Right lobe of liver (tissue), 6 donors: ENCODE measurements at regions of chr11 and their contacts with region 1.

Region 1: DNA sequence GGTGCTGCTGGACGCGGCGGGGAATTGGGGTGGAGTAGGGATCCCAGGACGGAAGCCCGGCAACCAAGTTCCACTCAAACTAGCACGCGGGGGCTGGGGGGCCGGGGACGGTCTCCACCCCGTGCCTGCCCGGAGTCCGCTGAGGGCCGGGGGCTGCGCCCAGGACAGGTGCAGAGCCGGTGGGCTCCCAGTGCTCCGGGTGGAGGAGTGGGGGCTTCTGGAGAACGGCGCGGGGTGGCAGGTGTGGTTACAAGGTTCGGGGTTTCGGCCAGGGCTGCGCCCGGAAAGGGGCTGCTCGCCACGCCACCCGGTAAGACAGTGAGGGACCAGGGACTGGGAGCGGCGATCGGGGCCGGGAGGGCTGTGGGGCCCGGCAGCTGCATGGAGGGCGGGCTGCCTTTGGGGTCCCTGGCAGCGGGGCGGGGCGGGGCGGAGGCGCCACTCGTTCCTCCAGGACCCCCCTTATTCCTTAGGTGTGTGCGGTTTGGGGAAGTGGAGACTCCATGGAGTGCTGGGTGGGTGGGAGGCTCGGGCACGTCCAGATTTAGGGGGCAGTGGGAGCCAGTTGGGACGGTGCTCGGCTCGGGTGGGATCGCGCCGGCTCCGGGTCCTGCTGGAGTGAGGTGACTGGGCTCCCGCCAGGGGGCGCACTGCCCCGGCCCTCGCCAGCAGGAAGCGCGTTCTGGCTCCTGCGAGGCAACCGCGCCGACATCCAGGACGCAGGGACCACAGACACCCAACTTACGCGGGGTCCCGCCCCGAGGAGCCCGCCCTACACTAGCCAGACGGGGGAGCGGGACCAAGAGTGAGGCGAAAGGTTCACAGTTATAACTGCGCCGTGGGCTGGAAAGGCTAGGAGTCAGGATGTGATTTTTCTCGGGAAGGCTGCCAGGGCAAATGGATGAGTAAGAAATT is 868 bp downstream of the TSPAN18 start:
- DNase-seq: peak; percentile 78 to 86 (median 84)
- ATAC-seq: peak; percentile 88 to 93 (median 92)
- H3K4me3 ChIP-seq: peak overlapping the region; percentile 37 to 48 (median 48)
- H3K27ac ChIP-seq: peak overlapping the region in 1 of 3 donors; percentile 14
- H3K4me1 ChIP-seq: peaks cover 0 to 7% (median 0%) of the 10 kb centered on the region in 4 donors
- H3K27me3 ChIP-seq: no peaks in the 10 kb centered on the region
- CTCF ChIP-seq: peak; percentile 82 to 95 (median 94)
- POLR2A ChIP-seq: no peak

Region 2: GRCh38 chr11:44911029-44911814 is 183.6 kb after region 1 on chr11:
- intact Hi-C with region 1: loop called in 1 of 2 experiments (anchors 10 kb)
- DNase-seq: peak in 2 of 3 donors; percentile 72 to 85
- ATAC-seq: peak; percentile 73 to 81 (median 78)
- H3K4me3 ChIP-seq: peak overlapping the region in 1 of 3 donors; percentile 13
- H3K27ac ChIP-seq: no peak overlapping the region
- H3K4me1 ChIP-seq: peaks cover 0 to 22% (median 0%) of the 10 kb centered on the region in 4 donors
- H3K27me3 ChIP-seq: no peaks in the 10 kb centered on the region
- CTCF ChIP-seq: peak; percentile 72 to 88 (median 86)
- POLR2A ChIP-seq: no peak